Naive thymus-derived CD8-positive, alpha-beta T cell (primary cell): ENCODE measurements at regions of chr19 and their contacts with region 1.

Region 1: DNA sequence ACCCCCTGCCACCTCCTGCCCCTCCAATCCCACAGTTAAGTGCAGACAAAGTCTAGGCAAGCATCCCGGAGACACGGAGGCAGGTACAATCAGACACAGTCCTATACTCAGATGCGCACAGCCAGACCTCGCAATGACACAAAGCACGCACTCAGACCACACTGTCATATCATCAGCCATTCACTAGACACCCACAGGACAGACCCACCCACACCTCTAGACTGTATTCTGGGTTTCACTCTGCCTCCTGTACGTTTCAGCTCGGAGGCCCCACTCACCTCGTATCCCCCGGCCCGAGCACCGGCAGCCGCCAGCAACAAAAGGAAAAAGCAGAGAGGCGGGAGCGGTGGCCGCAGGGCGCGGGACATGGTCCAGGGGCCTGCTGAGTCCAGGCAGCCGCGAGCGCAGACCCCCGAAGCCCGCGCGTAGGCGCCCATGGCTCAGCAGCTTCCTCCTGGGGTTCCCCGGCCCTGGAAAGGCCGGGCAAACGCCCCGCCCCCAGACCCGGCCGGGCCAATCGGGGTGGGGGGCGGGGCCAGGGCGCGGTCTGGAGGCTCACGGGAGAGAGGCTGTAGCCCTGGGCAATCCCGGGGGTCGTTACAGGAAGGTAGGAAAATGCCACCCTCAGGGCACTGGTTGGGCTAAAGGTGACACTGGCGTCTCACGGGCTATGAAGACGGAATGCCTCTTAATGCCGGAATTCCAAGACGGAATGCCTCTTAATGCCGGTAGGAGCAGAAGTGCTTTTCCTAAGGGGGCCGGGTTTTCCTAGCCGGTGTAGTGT is at the starts of genes MAN2B1 and WDR83:
- DNase-seq: peak; percentile 39 to 85 (median 76)
- ATAC-seq: peak; percentile 75 to 79
- H3K4me3 Mint-ChIP-seq: peak within 1 kb of the TSS; percentile 93 to 99 (median 96)
- H3K27ac Mint-ChIP-seq: peak within 1 kb of the TSS; percentile 85 to 100 (median 96)
- H3K4me1 Mint-ChIP-seq: peaks cover 18 to 66% (median 58%) of the 10 kb centered on the region in 4 donors
- H3K27me3 Mint-ChIP-seq: no peaks in the 10 kb centered on the region
- polyA plus RNA-seq, gene MAN2B1: 33.9 to 55.4 (median 34.7) TPM
- polyA plus RNA-seq, gene WDR83: 12.6 to 19.9 (median 12.9) TPM

Region 2: GRCh38 chr19:12596485-12596884 is 70.0 kb before region 1 on chr19:
- POLR2A ChIA-PET with region 1: no interaction called
- DNase-seq: no peak
- ATAC-seq: no peak
- H3K4me3 Mint-ChIP-seq: no peak overlapping the region
- H3K27ac Mint-ChIP-seq: no peak overlapping the region
- H3K4me1 Mint-ChIP-seq: peaks cover 0 to 3% (median 0%) of the 10 kb centered on the region in 4 donors
- H3K27me3 Mint-ChIP-seq: no peaks in the 10 kb centered on the region

Region 3: GRCh38 chr19:12639901-12640613 is 26.4 kb before region 1 on chr19:
- POLR2A ChIA-PET with region 1: interaction called, 12 read pairs
- DNase-seq: peak; percentile 68 to 90 (median 81)
- ATAC-seq: peak; percentile 83 to 90
- H3K4me3 Mint-ChIP-seq: peak overlapping the region; percentile 74 to 89 (median 82)
- H3K27ac Mint-ChIP-seq: peak overlapping the region; percentile 79 to 95 (median 93)
- H3K4me1 Mint-ChIP-seq: peaks cover 8 to 35% (median 21%) of the 10 kb centered on the region in 4 donors
- H3K27me3 Mint-ChIP-seq: no peaks in the 10 kb centered on the region